ENCODE measurements at regions of chr6 and their contacts with region 1.

Region 1: GRCh38 chr6:96897383-96898240 is at the start of gene NDUFAF4:
- DNase-seq: peak; percentile 95 to 97
- H3K4me3 ChIP-seq: peak within 1 kb of the TSS; percentile 94 to 98
- H3K27ac ChIP-seq: peak within 1 kb of the TSS; percentile 84 to 92
- H3K4me1 ChIP-seq: peaks cover 0 to 44% (median 20%) of the 10 kb centered on the region in 4 donors
- H3K27me3 ChIP-seq: no peaks in the 10 kb centered on the region
- CTCF ChIP-seq: peak; percentile 91 to 94

Region 2: GRCh38 chr6:96521644-96522464 is 375.8 kb before region 1 on chr6 and contains the start of gene UFL1:
- intact Hi-C with region 1: loop called (anchors 5 kb)
- DNase-seq: peak; percentile 95 to 97
- H3K4me3 ChIP-seq: peak within 1 kb of the TSS; percentile 60 to 71
- H3K27ac ChIP-seq: peak within 1 kb of the TSS; percentile 85 to 92
- H3K4me1 ChIP-seq: peaks cover 0 to 26% (median 16%) of the 10 kb centered on the region in 4 donors
- H3K27me3 ChIP-seq: no peaks in the 10 kb centered on the region
- CTCF ChIP-seq: no peak

Region 3: DNA sequence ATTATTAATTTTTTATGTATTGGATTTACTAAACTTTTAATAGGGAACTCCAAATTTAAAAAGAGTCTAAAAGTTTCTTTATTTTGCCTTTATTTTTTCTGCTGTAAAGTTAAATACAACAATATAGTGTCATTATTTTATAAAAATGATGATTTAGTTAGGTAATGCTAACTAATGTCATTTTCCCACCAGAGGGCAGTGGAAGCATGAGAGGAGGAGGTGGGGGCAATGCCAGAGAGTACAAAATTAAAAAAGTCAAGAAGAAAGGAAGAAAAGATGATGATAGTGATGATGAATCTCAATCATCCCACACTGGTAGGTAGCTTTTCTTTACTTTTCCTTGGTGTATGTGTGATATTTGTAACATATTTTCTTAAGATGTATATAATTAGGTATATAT is 354.9 kb before region 1 on chr6:
- intact Hi-C with region 1: loop called (anchors 5 kb)
- DNase-seq: no peak
- H3K4me3 ChIP-seq: no peak overlapping the region
- H3K27ac ChIP-seq: no peak overlapping the region
- H3K4me1 ChIP-seq: peaks cover 0 to 7% (median 0%) of the 10 kb centered on the region in 4 donors
- H3K27me3 ChIP-seq: no peaks in the 10 kb centered on the region
- CTCF ChIP-seq: peak; percentile 58 to 67

Region 4: GRCh38 chr6:96626759-96627364 is 270.8 kb before region 1 on chr6:
- intact Hi-C with region 1: loop called (anchors 5 kb)
- DNase-seq: no peak
- H3K4me3 ChIP-seq: no peak overlapping the region
- H3K27ac ChIP-seq: peak overlapping the region in 1 of 2 donors; percentile 65
- H3K4me1 ChIP-seq: peaks cover 0 to 54% (median 2%) of the 10 kb centered on the region in 4 donors
- H3K27me3 ChIP-seq: no peaks in the 10 kb centered on the region
- CTCF ChIP-seq: peak; percentile 33 to 46

Region 5: DNA sequence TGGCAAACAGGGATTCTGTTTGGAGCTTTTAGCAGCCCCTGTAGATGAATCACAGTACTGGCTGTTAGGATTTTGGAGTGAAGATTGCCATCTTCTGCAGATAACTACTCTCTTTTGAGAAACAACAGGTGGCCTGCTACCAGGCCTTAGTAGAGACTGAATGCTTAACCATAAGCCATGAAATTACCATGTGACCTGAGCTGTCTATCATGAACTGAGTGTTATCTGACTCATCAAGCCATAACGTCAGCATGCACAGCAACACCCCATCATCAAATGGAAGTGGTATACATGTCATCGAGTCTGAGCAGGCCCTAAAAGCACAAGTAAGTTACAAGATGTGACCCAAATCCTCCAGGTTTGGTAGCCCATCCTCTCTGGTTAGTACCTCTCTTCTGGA is 192.9 kb before region 1 on chr6:
- intact Hi-C with region 1: no loop called
- DNase-seq: no peak
- H3K4me3 ChIP-seq: no peak overlapping the region
- H3K27ac ChIP-seq: no peak overlapping the region
- H3K4me1 ChIP-seq: no peaks in the 10 kb centered on the region
- H3K27me3 ChIP-seq: no peaks in the 10 kb centered on the region
- CTCF ChIP-seq: no peak

Region 6: DNA sequence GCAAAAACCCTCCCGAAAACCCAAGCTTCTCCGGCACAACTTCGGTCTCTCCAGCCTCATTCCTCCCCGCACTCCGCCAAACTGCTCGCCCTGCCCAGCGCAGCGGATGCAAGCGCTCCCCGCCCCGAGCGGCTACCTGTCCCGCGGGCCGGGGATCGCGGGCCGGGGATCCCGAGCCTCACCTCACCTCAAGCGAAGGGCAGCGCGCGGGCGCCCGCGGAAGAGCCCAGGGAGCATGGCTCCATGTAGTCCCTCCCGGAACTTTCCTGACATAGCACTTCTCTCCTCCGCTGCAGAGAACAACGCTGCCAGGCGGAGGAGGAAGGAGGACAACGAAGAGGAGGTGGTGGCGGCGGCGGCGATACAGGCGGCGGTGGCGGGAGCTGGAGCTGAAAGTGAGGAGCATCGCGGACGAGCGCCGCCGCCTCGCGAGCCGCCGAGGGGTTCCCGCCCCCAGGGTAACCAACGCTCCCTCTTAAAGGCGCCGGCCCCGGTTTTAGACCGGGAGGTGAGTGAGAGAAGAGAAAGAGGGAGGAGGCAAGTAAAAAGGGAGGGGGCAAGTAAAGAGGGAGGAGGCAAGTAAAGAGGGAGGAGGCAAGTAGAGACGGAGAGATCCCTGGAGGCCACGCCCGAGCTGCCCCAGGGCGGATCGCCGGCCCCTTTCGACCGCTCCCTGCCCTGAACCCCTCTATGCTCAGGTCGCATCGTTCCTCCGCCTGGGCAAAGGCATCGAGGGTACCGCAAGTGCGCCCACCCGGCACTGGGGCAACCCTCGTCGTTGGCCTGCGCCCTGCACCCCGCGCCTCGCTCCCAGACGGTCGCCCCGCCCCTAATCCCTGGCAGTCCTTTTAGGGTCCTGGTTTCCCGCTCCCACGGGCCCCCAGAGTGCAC is 60.3 kb before region 1 on chr6 and contains the start of gene GPR63:
- intact Hi-C with region 1: loop called (anchors 10 kb)
- DNase-seq: peak; percentile 57 to 77
- H3K4me3 ChIP-seq: peak within 1 kb of the TSS; percentile 82 to 94
- H3K27ac ChIP-seq: peak within 1 kb of the TSS; percentile 72 to 79
- H3K4me1 ChIP-seq: peaks cover 0 to 23% (median 9%) of the 10 kb centered on the region in 4 donors
- H3K27me3 ChIP-seq: no peaks in the 10 kb centered on the region
- CTCF ChIP-seq: no peak

Region 7: GRCh38 chr6:96864216-96865054 is 33.2 kb before region 1 on chr6:
- intact Hi-C with region 1: no loop called
- DNase-seq: no peak
- H3K4me3 ChIP-seq: no peak overlapping the region
- H3K27ac ChIP-seq: no peak overlapping the region
- H3K4me1 ChIP-seq: no peaks in the 10 kb centered on the region
- H3K27me3 ChIP-seq: no peaks in the 10 kb centered on the region
- CTCF ChIP-seq: no peak

Region 8: DNA sequence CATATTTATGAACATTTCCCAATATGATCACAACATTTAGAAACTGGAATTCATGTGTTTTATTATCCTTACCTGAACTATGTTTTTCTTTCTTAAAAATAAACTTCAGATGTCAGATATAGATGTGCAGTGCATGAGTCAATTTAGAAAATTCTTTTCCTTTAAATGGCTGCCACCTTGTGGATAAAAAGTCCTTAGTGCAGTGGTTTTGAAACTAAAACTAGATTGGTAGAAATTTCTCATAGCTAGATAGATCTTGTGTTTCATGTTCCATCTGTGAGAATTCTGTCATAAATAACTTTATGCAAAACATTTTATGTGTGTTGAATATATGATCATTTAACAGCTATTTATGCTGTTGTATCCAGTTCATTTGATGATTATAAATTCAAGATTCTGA is 161.9 kb after region 1 on chr6:
- intact Hi-C with region 1: loop called (anchors 5 kb)
- DNase-seq: no peak
- H3K4me3 ChIP-seq: no peak overlapping the region
- H3K27ac ChIP-seq: no peak overlapping the region
- H3K4me1 ChIP-seq: peaks cover 0 to 5% (median 2%) of the 10 kb centered on the region in 4 donors
- H3K27me3 ChIP-seq: no peaks in the 10 kb centered on the region
- CTCF ChIP-seq: peak; percentile 49 to 56

Measured in tibial artery (tissue), 4 donors.